ENCODE measurements at regions of chr2 and their contacts with region 1.

Region 1: GRCh38 chr2:105521205-105521604 is 122.4 kb upstream of the FHL2 start:
- DNase-seq: peak; percentile 46
- H3K4me3 ChIP-seq: no peak overlapping the region
- H3K27ac ChIP-seq: no peak overlapping the region
- H3K4me1 ChIP-seq: peaks cover 0 to 15% of the 10 kb centered on the region in 2 experiments; a peak in 1 of 4 replicates
- H3K27me3 ChIP-seq: no peaks in the 10 kb centered on the region
- CTCF ChIP-seq: peak; percentile 74
- EP300 ChIP-seq: no peak
- RAD21 ChIP-seq: peak; percentile 88

Region 2: DNA sequence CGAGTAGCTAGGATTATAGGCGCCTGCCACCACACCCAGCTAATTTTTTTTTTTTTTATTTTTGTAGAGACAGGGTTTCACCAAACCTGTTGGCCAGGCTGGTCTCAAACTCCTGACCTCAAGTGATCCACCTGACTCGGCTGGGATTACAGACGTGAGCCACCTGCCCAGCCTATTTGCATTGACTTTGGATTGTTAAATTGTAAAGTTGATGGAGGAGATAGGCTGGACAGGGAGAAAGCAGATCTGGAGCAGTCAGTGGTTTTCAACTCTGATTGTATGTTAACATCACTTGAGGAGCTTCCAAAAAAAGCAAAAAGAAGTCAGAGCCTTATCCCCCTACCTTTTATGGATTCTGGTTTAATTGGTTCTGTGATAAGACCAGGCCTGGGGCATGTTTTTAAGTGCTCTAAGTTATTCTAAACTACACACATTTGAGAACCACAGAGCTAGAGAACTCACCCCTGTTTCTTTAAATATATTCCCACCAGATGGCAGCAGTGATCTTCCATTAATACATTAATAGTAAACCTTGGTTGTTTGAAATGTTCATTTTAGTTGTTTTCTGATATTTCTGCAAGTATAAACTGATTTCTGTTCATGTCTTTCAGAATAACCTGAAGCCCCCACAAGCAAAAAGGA is 176.4 kb before region 1 on chr2:
- CTCF ChIA-PET with region 1: interaction called, 11 read pairs
- POLR2A ChIA-PET with region 1: no interaction called
- DNase-seq: peak; percentile 27
- H3K4me3 ChIP-seq: no peak overlapping the region
- H3K27ac ChIP-seq: no peak overlapping the region
- H3K4me1 ChIP-seq: no peaks in the 10 kb centered on the region
- H3K27me3 ChIP-seq: no peaks in the 10 kb centered on the region
- CTCF ChIP-seq: peak; percentile 64
- EP300 ChIP-seq: no peak
- RAD21 ChIP-seq: peak; percentile 51

Region 3: DNA sequence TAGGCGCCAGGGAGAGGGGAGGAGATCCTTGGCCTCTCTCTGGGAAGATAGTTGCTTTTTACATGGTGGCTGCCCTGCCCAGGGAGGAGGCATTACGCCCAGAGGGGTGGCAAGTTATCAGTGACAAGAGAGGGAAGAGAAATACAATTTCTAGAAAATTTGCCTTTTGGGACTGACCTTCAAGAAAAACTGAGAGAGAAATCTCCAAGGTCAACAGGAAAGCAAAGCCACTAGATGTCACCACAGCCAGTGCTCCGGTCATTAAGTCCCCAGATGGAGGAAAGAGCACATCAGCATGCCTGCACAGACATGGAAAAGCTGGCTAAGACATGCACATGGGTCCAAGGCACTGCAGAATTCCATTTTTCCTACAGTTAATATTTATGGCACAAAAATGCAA is 143.4 kb before region 1 on chr2:
- CTCF ChIA-PET with region 1: interaction called, 35 read pairs
- POLR2A ChIA-PET with region 1: no interaction called
- DNase-seq: peak; percentile 64
- H3K4me3 ChIP-seq: no peak overlapping the region
- H3K27ac ChIP-seq: no peak overlapping the region
- H3K4me1 ChIP-seq: peaks cover 6% of the 10 kb centered on the region in 2 experiments; a peak in 1 of 4 replicates
- H3K27me3 ChIP-seq: no peaks in the 10 kb centered on the region
- CTCF ChIP-seq: peak; percentile 32
- EP300 ChIP-seq: no peak
- RAD21 ChIP-seq: peak; percentile 81

Region 4: GRCh38 chr2:105403785-105404698 is 117.2 kb before region 1 on chr2:
- CTCF ChIA-PET with region 1: interaction called, 19 read pairs
- POLR2A ChIA-PET with region 1: no interaction called
- DNase-seq: no peak
- H3K4me3 ChIP-seq: no peak overlapping the region
- H3K27ac ChIP-seq: peak overlapping the region in 1 of 2 experiments; percentile 73; a peak in 2 of 4 replicates
- H3K4me1 ChIP-seq: peaks cover 7 to 16% of the 10 kb centered on the region in 2 experiments; a peak in 2 of 4 replicates
- H3K27me3 ChIP-seq: no peaks in the 10 kb centered on the region
- CTCF ChIP-seq: peak; percentile 53
- EP300 ChIP-seq: peak in 1 of 2 experiments; percentile 52; a peak in 1 of 4 replicates
- RAD21 ChIP-seq: no peak

Region 5: GRCh38 chr2:105537920-105538319 is 16.7 kb after region 1 on chr2:
- CTCF ChIA-PET with region 1: interaction called, 10 read pairs
- POLR2A ChIA-PET with region 1: no interaction called
- DNase-seq: no peak
- H3K4me3 ChIP-seq: no peak overlapping the region
- H3K27ac ChIP-seq: no peak overlapping the region
- H3K4me1 ChIP-seq: no peaks in the 10 kb centered on the region
- H3K27me3 ChIP-seq: no peaks in the 10 kb centered on the region; the same call in 1 of the 2 replicates
- CTCF ChIP-seq: no peak
- EP300 ChIP-seq: no peak
- RAD21 ChIP-seq: no peak

Measured in SK-N-SH (cell line).